WTC11 (cell line): ENCODE measurements at regions of chr10 and their contacts with region 1.

Region 1: GRCh38 chr10:73814896-73815718 is 3.7 kb upstream of the NDST2 start:
- DNase-seq: peak; percentile 42
- ATAC-seq: no peak
- H3K4me3 Mint-ChIP-seq: no peak overlapping the region
- H3K27ac Mint-ChIP-seq: no peak overlapping the region
- H3K4me1 Mint-ChIP-seq: peaks cover 10% of the 10 kb centered on the region
- H3K27me3 Mint-ChIP-seq: no peaks in the 10 kb centered on the region
- CTCF ChIP-seq: peak; percentile 66

Region 2: GRCh38 chr10:73625884-73626752 is 189.0 kb before region 1 on chr10:
- CTCF ChIA-PET with region 1: no interaction called
- POLR2A ChIA-PET with region 1: no interaction called
- DNase-seq: peak; percentile 93
- ATAC-seq: peak; percentile 96
- H3K4me3 Mint-ChIP-seq: peak overlapping the region; percentile 97
- H3K27ac Mint-ChIP-seq: peak overlapping the region; percentile 96
- H3K4me1 Mint-ChIP-seq: peaks cover 20% of the 10 kb centered on the region
- H3K27me3 Mint-ChIP-seq: no peaks in the 10 kb centered on the region; the same call in 1 of the 2 replicates
- CTCF ChIP-seq: no peak

Region 3: DNA sequence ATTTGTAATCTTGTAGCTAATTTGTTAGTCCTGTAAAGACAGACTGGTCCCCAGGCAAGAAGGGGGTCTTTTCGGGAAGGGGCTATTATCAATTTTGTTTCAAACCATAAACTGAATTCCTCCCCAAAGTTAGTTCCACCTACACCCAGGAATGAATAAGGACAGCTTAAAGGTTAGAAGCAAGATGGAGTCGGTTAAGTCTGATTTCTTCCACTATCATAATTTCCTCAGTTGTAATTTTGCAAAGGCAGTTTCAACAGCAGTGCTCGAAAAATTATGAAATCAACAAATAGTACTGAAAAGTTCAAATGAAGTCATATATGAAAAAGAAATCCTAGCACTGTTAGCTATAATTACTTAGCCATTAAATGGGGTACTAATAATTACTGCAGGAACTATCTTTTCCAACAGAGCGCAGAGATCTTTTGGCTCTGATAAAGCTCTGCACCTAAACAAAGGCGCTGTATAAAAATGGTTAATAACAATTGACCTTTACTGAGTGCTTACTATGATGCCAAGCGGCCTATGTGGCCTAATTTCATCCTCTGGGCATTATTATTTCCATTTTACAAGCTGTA is 71.7 kb before region 1 on chr10:
- CTCF ChIA-PET with region 1: no interaction called
- POLR2A ChIA-PET with region 1: no interaction called
- DNase-seq: no peak
- ATAC-seq: no peak
- H3K4me3 Mint-ChIP-seq: peak overlapping the region; percentile 97
- H3K27ac Mint-ChIP-seq: peak overlapping the region; percentile 99
- H3K4me1 Mint-ChIP-seq: peaks cover 30% of the 10 kb centered on the region
- H3K27me3 Mint-ChIP-seq: no peaks in the 10 kb centered on the region
- CTCF ChIP-seq: no peak

Region 4: DNA sequence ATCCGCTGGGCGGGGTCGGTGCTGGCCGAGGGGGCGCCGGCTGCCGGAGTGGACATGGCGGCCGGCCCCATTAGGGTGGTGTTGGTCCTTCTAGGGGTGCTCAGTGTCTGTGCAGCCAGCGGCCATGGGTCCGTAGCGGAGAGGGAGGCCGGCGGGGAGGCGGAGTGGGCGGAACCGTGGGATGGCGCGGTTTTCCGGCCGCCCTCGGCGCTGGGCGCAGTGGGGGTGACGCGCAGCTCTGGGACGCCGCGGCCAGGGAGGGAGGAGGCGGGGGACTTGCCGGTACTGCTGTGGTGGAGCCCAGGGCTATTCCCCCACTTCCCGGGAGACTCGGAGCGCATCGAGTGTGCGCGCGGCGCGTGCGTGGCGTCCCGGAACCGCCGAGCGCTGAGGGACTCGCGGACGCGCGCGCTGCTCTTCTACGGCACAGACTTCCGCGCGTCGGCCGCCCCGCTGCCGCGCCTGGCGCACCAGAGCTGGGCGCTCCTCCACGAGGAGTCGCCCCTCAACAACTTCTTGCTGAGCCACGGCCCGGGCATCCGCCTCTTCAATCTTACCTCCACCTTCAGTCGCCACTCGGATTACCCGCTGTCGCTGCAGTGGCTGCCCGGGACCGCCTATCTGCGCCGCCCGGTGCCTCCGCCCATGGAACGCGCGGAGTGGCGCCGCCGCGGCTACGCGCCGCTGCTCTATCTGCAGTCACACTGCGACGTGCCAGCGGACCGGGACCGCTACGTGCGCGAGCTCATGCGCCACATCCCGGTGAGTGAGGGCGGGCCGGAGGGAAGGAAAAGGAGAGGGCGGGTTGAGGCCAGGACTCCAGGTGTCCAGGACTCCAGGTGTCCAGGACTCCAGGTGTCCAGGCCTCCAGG is 42.6 kb before region 1 on chr10:
- CTCF ChIA-PET with region 1: interaction called, 13 read pairs
- POLR2A ChIA-PET with region 1: no interaction called
- DNase-seq: peak; percentile 67
- ATAC-seq: peak; percentile 58
- H3K4me3 Mint-ChIP-seq: peak overlapping the region; percentile 91
- H3K27ac Mint-ChIP-seq: no peak overlapping the region
- H3K4me1 Mint-ChIP-seq: peaks cover 34% of the 10 kb centered on the region
- H3K27me3 Mint-ChIP-seq: no peaks in the 10 kb centered on the region
- CTCF ChIP-seq: no peak

Region 5: GRCh38 chr10:73798927-73799563 is 16.1 kb before region 1 on chr10:
- CTCF ChIA-PET with region 1: no interaction called
- POLR2A ChIA-PET with region 1: no interaction called
- DNase-seq: no peak
- ATAC-seq: no peak
- H3K4me3 Mint-ChIP-seq: no peak overlapping the region
- H3K27ac Mint-ChIP-seq: no peak overlapping the region
- H3K4me1 Mint-ChIP-seq: no peaks in the 10 kb centered on the region
- H3K27me3 Mint-ChIP-seq: no peaks in the 10 kb centered on the region
- CTCF ChIP-seq: no peak

Region 6: DNA sequence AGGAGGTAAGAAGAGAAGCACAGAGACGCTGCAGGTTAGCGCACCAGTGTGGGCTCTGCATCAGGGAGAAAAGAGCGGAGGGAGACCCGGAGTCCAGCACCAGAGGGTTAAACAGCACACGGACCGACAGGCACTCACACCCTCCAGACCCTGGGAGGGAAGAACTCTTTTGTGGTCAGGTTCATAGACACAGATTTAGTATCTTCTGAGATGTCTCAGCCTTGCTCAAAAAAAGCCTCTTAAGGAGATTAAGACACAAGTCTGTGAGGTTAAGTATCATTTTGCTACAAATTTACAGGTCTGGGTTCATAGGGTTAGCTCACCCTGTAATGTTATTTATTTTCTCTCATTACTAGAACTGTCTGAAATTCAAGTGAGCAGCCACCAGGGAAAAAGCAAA is 13.1 kb after region 1 on chr10:
- CTCF ChIA-PET with region 1: interaction called, 14 read pairs
- POLR2A ChIA-PET with region 1: interaction called, 3 read pairs
- DNase-seq: no peak
- ATAC-seq: no peak
- H3K4me3 Mint-ChIP-seq: no peak overlapping the region
- H3K27ac Mint-ChIP-seq: no peak overlapping the region
- H3K4me1 Mint-ChIP-seq: no peaks in the 10 kb centered on the region
- H3K27me3 Mint-ChIP-seq: no peaks in the 10 kb centered on the region
- CTCF ChIP-seq: no peak